H1 (cell line): ENCODE measurements at regions of chr16 and their contacts with region 1.

Region 1: GRCh38 chr16:9679213-9679767 is 502.9 kb downstream of the GRIN2A start:
- DNase-seq: no peak
- H3K4me3 ChIP-seq: peak overlapping the region in 1 of 4 experiments; percentile 53; a peak in 1 of 8 replicates
- H3K27ac ChIP-seq: 0 out of 2 replicates have a peak overlapping the region, but pooled peaks have one; percentile 12
- H3K4me1 ChIP-seq: peaks cover 3 to 31% (median 24%) of the 10 kb centered on the region in 4 experiments
- H3K27me3 ChIP-seq: no peaks in the 10 kb centered on the region
- CTCF ChIP-seq: no peak
- EP300 ChIP-seq: no peak
- POLR2A ChIP-seq: no peak
- RAD21 ChIP-seq: no peak

Region 2: GRCh38 chr16:9665851-9666271 is 13.4 kb before region 1 on chr16:
- CTCF ChIA-PET with region 1: interaction called, 3 read pairs
- POLR2A ChIA-PET with region 1: interaction called, 82 read pairs
- DNase-seq: no peak
- H3K4me3 ChIP-seq: no peak overlapping the region
- H3K27ac ChIP-seq: no peak overlapping the region
- H3K4me1 ChIP-seq: peaks cover 0 to 17% (median 5%) of the 10 kb centered on the region in 4 experiments; a peak in 5 of 7 replicates
- H3K27me3 ChIP-seq: no peaks in the 10 kb centered on the region; a peak in 1 of 7 replicates
- CTCF ChIP-seq: no peak
- EP300 ChIP-seq: no peak
- POLR2A ChIP-seq: peak; percentile 61 to 70
- RAD21 ChIP-seq: no peak

Region 3: DNA sequence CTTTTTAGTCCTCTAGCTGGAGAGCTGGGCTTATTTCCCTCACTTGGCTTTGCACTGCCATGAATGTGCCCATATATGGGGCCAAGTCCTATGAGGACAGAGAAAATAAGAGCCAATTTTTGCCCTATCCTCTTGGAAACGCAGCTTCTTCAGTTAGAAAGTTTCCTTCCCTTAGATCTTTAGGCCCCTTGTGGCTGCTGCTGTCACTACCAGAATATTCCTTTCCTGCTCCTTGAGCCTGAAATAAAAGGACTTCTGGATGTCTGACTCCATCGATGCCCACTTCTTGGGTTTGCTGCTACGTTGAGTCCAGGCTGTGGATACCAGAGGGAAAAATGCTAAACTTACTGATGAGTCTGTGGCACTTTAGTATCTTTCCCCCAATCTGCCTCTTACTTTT is 15.9 kb after region 1 on chr16:
- CTCF ChIA-PET with region 1: interaction called, 16 read pairs
- POLR2A ChIA-PET with region 1: interaction called, 22 read pairs
- DNase-seq: no peak
- H3K4me3 ChIP-seq: no peak overlapping the region
- H3K27ac ChIP-seq: no peak overlapping the region
- H3K4me1 ChIP-seq: peaks cover 0 to 6% (median 0%) of the 10 kb centered on the region in 4 experiments; a peak in 1 of 7 replicates
- H3K27me3 ChIP-seq: no peaks in the 10 kb centered on the region
- CTCF ChIP-seq: peak in 2 of 3 experiments; percentile 37 to 39; a peak in 3 of 4 replicates
- EP300 ChIP-seq: no peak
- POLR2A ChIP-seq: no peak
- RAD21 ChIP-seq: peak in 1 of 2 experiments; percentile 42; a peak in 2 of 4 replicates

Region 4: GRCh38 chr16:9761870-9762269 is 82.6 kb after region 1 on chr16:
- CTCF ChIA-PET with region 1: no interaction called
- POLR2A ChIA-PET with region 1: no interaction called
- DNase-seq: no peak
- H3K4me3 ChIP-seq: no peak overlapping the region
- H3K27ac ChIP-seq: no peak overlapping the region
- H3K4me1 ChIP-seq: peaks cover 0 to 7% (median 3%) of the 10 kb centered on the region in 4 experiments; a peak in 6 of 7 replicates
- H3K27me3 ChIP-seq: no peaks in the 10 kb centered on the region
- CTCF ChIP-seq: no peak
- EP300 ChIP-seq: no peak
- POLR2A ChIP-seq: no peak
- RAD21 ChIP-seq: no peak

Region 5: GRCh38 chr16:9772526-9773225 is 93.4 kb after region 1 on chr16:
- CTCF ChIA-PET with region 1: no interaction called
- POLR2A ChIA-PET with region 1: no interaction called
- DNase-seq: no peak
- H3K4me3 ChIP-seq: no peak overlapping the region
- H3K27ac ChIP-seq: no peak overlapping the region
- H3K4me1 ChIP-seq: peaks cover 0 to 5% (median 0%) of the 10 kb centered on the region in 4 experiments; a peak in 2 of 7 replicates
- H3K27me3 ChIP-seq: no peaks in the 10 kb centered on the region
- CTCF ChIP-seq: no peak
- EP300 ChIP-seq: no peak
- POLR2A ChIP-seq: no peak
- RAD21 ChIP-seq: no peak